ENCODE measurements at regions of chr9 and their contacts with region 1.

Region 1: GRCh38 chr9:21812946-21813568 is 10.6 kb downstream of the MTAP start:
- H3K4me3 Mint-ChIP-seq: no peak overlapping the region
- H3K27ac Mint-ChIP-seq: no peak overlapping the region
- H3K4me1 Mint-ChIP-seq: peaks cover 19% of the 10 kb centered on the region
- H3K27me3 Mint-ChIP-seq: no peaks in the 10 kb centered on the region

Region 2: DNA sequence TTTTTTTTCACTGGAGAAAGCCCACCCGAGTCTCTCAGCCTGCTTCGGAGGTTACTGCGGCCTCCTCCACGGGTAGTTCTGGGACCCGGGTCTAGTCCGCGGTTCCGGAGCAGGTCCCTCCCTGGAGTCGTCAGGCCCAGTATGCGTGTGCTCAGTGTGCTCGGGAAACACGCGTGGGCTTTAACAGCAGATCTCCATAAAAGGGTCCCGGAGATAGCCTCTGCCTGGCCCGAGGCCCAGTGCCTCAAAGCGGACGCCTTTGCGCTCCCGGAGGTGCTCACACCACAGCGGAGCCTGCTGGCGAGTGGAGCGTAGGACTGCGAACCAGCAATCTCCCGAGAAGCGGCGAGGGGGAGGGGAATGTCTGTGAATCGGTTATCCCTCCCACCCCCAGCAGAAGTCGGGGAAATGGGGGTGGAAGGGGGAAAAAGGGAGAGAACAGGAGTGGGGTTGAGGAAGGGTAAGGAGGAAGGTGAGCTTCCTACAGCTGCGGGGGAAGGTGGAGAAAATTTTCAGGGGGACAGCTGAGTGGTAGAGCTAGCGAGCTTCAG is 152.4 kb after region 1 on chr9:
- intact Hi-C with region 1: loop called (anchors 10 kb)
- H3K4me3 Mint-ChIP-seq: peak overlapping the region; percentile 67
- H3K27ac Mint-ChIP-seq: peak overlapping the region; percentile 14
- H3K4me1 Mint-ChIP-seq: peaks cover 55% of the 10 kb centered on the region
- H3K27me3 Mint-ChIP-seq: peaks cover 90% of the 10 kb centered on the region

Region 3: GRCh38 chr9:22037954-22038690 is 225.1 kb after region 1 on chr9:
- intact Hi-C with region 1: loop called (anchors 5 kb)
- H3K4me3 Mint-ChIP-seq: no peak overlapping the region
- H3K27ac Mint-ChIP-seq: no peak overlapping the region
- H3K4me1 Mint-ChIP-seq: peaks cover 6% of the 10 kb centered on the region
- H3K27me3 Mint-ChIP-seq: peaks cover 6% of the 10 kb centered on the region

Region 4: GRCh38 chr9:22238809-22239684 is 426.0 kb after region 1 on chr9:
- intact Hi-C with region 1: loop called (anchors 2 kb)
- H3K4me3 Mint-ChIP-seq: no peak overlapping the region
- H3K27ac Mint-ChIP-seq: no peak overlapping the region
- H3K4me1 Mint-ChIP-seq: peaks cover 29% of the 10 kb centered on the region
- H3K27me3 Mint-ChIP-seq: peaks cover 13% of the 10 kb centered on the region

Region 5: GRCh38 chr9:22452415-22453010 is 639.5 kb after region 1 on chr9:
- intact Hi-C with region 1: loop called (anchors 1 kb)
- H3K4me3 Mint-ChIP-seq: no peak overlapping the region
- H3K27ac Mint-ChIP-seq: no peak overlapping the region
- H3K4me1 Mint-ChIP-seq: no peaks in the 10 kb centered on the region
- H3K27me3 Mint-ChIP-seq: peaks cover 23% of the 10 kb centered on the region